ENCODE measurements at regions of chr7 and their contacts with region 1.

Region 1: GRCh38 chr7:28078036-28078901 is 102.3 kb downstream of the JAZF1 start:
- DNase-seq: peak; percentile 62
- ATAC-seq: peak; percentile 76
- H3K4me3 Mint-ChIP-seq: no peak overlapping the region
- H3K27ac Mint-ChIP-seq: no peak overlapping the region
- H3K4me1 Mint-ChIP-seq: no peaks in the 10 kb centered on the region
- H3K27me3 Mint-ChIP-seq: no peaks in the 10 kb centered on the region
- CTCF ChIP-seq: peak; percentile 92

Region 2: DNA sequence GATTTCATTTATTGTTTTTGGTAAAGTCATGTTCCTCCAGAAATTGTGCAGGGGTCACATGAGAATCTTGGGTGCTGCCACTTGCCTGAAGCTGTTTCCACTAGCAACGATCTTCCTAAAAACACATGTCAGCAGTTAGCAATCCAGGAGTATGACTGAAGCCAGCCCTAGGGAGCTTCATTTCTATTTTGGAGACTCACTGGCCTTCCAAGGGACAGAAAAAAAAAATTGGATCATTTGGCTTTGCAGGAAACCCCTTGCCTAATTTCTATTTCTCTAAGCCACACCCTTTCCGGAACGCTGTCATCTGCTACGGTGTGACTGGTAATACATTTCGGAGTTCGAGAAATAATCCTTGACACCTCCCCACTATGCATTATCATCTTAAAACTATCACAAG is 133.6 kb before region 1 on chr7:
- CTCF ChIA-PET with region 1: no interaction called
- POLR2A ChIA-PET with region 1: no interaction called
- intact Hi-C with region 1: no loop called
- DNase-seq: no peak
- ATAC-seq: no peak
- H3K4me3 Mint-ChIP-seq: no peak overlapping the region
- H3K27ac Mint-ChIP-seq: no peak overlapping the region
- H3K4me1 Mint-ChIP-seq: no peaks in the 10 kb centered on the region
- H3K27me3 Mint-ChIP-seq: no peaks in the 10 kb centered on the region
- CTCF ChIP-seq: no peak

Region 3: GRCh38 chr7:28052933-28053332 is 25.3 kb before region 1 on chr7:
- CTCF ChIA-PET with region 1: interaction called, 12 read pairs
- POLR2A ChIA-PET with region 1: no interaction called
- intact Hi-C with region 1: no loop called
- DNase-seq: no peak
- ATAC-seq: no peak
- H3K4me3 Mint-ChIP-seq: no peak overlapping the region
- H3K27ac Mint-ChIP-seq: no peak overlapping the region
- H3K4me1 Mint-ChIP-seq: peaks cover 6% of the 10 kb centered on the region
- H3K27me3 Mint-ChIP-seq: no peaks in the 10 kb centered on the region
- CTCF ChIP-seq: no peak

Region 4: DNA sequence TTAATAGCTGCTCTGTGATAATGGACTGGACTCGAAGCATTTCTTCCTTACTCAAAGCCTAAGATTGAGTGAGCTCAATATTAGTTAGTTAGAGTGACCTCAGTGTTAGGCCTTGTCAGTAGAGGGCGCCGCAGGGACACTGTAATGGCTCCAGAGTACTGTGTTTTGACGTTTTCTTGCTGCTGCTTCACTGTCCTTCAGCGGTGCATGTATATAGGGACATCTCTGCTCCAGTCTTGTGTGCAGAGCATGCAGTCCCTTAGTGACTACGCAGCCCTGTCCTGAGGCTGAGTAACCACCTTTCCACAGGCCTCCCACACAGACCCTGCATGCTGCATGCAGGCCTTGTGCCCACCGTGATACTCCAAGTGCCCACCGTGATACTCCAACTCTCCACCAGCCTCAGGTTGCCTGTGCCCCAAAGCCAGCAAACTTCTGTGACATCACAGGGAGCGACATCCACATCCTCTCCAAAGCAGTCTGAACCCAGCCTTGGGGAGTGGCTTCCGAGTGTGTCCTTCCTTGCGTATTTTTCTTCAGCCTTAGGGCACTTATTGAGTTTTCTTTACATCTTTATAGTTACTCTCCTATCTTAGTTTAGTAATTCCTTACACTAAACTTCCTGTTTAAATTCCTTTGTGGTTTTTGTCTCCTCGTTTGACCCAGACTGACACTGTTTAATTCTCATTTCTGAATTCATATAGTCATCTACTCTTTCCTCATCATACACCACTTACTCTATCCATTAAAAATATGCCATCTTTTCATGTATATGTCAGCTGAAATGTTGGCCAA is 15.9 kb before region 1 on chr7:
- CTCF ChIA-PET with region 1: interaction called, 74 read pairs
- POLR2A ChIA-PET with region 1: no interaction called
- intact Hi-C with region 1: no loop called
- DNase-seq: peak; percentile 81
- ATAC-seq: peak; percentile 79
- H3K4me3 Mint-ChIP-seq: no peak overlapping the region
- H3K27ac Mint-ChIP-seq: no peak overlapping the region
- H3K4me1 Mint-ChIP-seq: peaks cover 4% of the 10 kb centered on the region
- H3K27me3 Mint-ChIP-seq: peaks cover 2% of the 10 kb centered on the region
- CTCF ChIP-seq: peak; percentile 42

Region 5: GRCh38 chr7:28280516-28280915 is 202.2 kb after region 1 on chr7:
- CTCF ChIA-PET with region 1: no interaction called
- POLR2A ChIA-PET with region 1: no interaction called
- intact Hi-C with region 1: no loop called
- DNase-seq: no peak
- ATAC-seq: no peak
- H3K4me3 Mint-ChIP-seq: no peak overlapping the region
- H3K27ac Mint-ChIP-seq: no peak overlapping the region
- H3K4me1 Mint-ChIP-seq: no peaks in the 10 kb centered on the region
- H3K27me3 Mint-ChIP-seq: peaks cover 17% of the 10 kb centered on the region
- CTCF ChIP-seq: no peak